AG04450 (cell line): ENCODE measurements at regions of chr1 and their contacts with region 1.

Region 1: DNA sequence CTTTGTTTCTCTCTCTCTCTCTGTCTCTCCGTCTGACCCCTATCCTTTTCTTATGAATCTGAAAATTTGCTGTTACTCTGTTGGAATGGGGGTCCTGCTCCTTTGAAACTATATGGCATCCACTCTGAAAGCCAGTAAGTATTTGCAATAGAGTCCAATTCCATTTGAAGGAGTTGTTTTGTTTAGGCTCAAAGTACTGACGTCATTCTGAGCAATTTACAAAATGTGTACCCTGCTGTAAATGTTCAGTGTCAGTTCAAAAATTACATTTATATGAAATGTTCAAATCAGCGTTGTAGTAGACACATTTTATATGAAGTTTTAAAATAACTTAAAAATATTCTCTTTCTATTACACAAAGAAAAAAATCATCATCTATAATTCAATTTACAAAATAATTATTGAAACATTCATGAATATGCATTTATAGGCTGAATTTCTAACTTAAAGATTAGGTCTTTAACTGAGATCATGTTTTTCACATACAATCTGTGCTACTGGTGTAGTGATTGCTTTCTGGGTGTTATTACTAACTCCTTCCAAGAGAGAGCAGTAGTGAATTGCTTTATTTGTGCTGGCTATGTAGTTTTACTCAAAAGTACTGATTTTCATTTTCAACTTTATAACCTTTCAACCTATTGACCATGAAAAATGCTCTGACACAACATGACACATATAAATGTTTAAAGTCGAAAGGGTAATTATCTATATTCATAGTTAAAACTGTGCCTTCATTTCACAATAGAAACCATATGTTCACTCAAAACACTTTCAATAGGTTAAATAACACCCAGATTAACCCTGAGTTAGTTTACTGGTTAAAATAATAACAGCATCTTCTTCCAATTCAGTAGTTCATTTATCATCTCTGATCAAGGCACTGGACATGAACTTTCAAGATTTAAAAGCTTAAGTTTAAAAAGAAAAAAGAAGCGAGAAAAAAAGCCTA is 253.1 kb upstream of the ADGRL4 start:
- DNase-seq: peak; percentile 7
- H3K4me3 ChIP-seq: no peak overlapping the region
- H3K27ac ChIP-seq: no peak overlapping the region
- H3K27me3 ChIP-seq: no peaks in the 10 kb centered on the region
- CTCF ChIP-seq: peak; percentile 71

Region 2: DNA sequence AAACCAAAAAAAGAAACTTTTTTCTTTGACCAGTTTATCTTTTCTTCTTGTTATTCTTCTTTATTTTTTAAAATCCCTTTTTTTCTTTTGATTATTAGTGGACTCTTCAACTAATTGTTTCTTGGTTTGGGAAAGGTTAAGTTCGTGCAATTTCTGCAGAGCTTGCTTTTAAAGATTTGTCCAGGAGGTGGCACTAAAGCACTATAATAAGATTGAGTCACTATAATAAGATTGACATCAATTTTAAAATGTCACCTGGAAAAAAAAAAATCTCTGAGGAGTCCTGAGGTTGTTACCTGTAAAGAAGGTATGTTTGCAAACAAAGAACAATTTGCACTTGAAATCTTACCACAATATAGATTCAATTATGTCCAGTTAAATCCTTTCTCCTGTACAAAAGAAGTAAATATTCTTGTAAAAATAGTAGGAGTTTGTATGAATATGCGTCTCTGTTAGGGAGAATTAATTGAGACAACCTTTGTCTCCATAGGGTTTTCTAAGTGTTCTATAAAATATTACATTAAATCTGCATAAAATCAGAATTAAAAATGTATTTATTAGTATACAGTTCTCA is 419.9 kb before region 1 on chr1:
- CTCF ChIA-PET with region 1: interaction called, 10 read pairs
- POLR2A ChIA-PET with region 1: no interaction called
- DNase-seq: no peak
- H3K4me3 ChIP-seq: no peak overlapping the region
- H3K27ac ChIP-seq: no peak overlapping the region
- H3K27me3 ChIP-seq: no peaks in the 10 kb centered on the region
- CTCF ChIP-seq: peak; percentile 65

Region 3: GRCh38 chr1:79353224-79353623 is 93.6 kb after region 1 on chr1:
- CTCF ChIA-PET with region 1: interaction called, 17 read pairs
- POLR2A ChIA-PET with region 1: no interaction called
- DNase-seq: peak; percentile 11
- H3K4me3 ChIP-seq: no peak overlapping the region
- H3K27ac ChIP-seq: no peak overlapping the region
- H3K27me3 ChIP-seq: no peaks in the 10 kb centered on the region
- CTCF ChIP-seq: peak; percentile 55